Vagina (tissue), 2 donors: ENCODE measurements at regions of chrX and their contacts with region 1.

Region 1: DNA sequence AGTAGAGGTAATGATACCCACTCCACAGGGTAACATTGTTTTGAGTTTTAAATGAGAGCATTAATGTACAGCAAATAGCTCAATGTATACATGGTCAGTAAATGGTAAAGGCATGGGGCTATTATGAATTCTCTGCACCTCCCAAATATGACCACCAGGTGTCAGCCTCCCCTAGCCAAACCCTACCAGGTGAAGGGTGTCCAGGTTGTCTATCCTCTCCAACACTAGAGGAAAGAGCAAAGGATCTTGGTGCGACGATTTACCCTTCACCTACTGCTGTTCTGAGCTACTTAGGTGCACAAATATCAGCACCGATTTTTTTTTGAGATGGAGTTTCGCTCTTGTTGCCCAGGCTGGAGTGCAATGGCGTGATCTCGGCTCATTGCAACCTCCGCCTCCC is 26.5 kb upstream of the XIAP start:
- DNase-seq: no peak
- H3K4me3 ChIP-seq: no peak overlapping the region
- H3K27ac ChIP-seq: no peak overlapping the region
- H3K4me1 ChIP-seq: no peaks in the 10 kb centered on the region
- H3K27me3 ChIP-seq: no peaks in the 10 kb centered on the region
- CTCF ChIP-seq: peak in 2 of 3 experiments; percentile 45 to 71
- POLR2A ChIP-seq: no peak

Region 2: DNA sequence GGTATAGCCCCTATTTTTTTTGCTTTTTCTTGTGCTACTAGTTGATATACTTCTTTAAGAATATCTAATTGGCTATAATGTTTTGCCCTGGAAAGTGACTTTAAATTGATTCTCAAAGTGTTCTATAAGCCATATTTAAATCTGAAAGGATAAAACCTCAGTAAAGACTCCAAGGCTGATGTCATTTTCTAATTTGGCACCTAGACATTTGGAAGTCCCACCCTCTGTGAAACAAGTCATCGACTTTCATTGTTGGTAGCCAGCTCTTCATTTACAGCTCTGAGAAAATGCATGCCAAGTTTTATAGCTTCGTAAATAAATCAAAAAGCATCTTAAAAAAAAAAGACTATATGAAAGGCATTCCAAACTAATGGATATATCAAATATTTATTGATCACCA is 110.1 kb after region 1 on chrX:
- intact Hi-C with region 1: loop called (anchors 10 kb)
- DNase-seq: no peak
- H3K4me3 ChIP-seq: no peak overlapping the region
- H3K27ac ChIP-seq: no peak overlapping the region
- H3K4me1 ChIP-seq: no peaks in the 10 kb centered on the region
- H3K27me3 ChIP-seq: no peaks in the 10 kb centered on the region
- CTCF ChIP-seq: no peak
- POLR2A ChIP-seq: no peak